ENCODE measurements at regions of chr1 and their contacts with region 1.

Region 1: DNA sequence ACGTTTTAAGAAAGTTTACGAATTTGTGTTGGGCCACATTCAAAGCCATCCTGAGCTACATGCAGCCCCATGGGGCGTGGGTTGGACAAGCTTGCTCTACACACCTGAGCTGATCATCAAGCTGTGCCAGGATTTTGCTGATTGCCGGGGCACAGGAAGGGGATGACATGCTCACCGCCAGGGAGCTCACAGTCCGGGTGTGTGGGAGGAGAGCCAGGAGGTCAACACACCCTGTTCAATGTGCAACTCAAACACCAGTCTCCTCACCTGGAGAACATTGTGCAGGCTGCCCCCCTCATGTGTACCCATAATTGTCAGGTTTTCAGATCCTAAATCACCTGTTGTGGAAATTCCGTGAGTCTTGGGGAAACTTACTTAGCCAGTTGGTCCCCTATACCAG is 969 bp downstream of the CYP4A11 start:
- DNase-seq: no peak
- ATAC-seq: no peak
- H3K4me3 Mint-ChIP-seq: no peak overlapping the region
- H3K27ac Mint-ChIP-seq: no peak overlapping the region
- H3K4me1 Mint-ChIP-seq: no peaks in the 10 kb centered on the region
- H3K27me3 Mint-ChIP-seq: peaks cover 9% of the 10 kb centered on the region

Region 2: GRCh38 chr1:47137925-47138615 is 197.8 kb after region 1 on chr1:
- CTCF ChIA-PET with region 1: no interaction called
- POLR2A ChIA-PET with region 1: interaction called, 4 read pairs
- intact Hi-C with region 1: loop called in 1 of 2 experiments (anchors 2 kb)
- DNase-seq: no peak
- ATAC-seq: no peak
- H3K4me3 Mint-ChIP-seq: no peak overlapping the region
- H3K27ac Mint-ChIP-seq: no peak overlapping the region
- H3K4me1 Mint-ChIP-seq: no peaks in the 10 kb centered on the region
- H3K27me3 Mint-ChIP-seq: peaks cover 7% of the 10 kb centered on the region